CD4-positive, alpha-beta memory T cell (primary cell): ENCODE measurements at regions of chr1 and their contacts with region 1.

Region 1: GRCh38 chr1:33007190-33008050 is 29.3 kb downstream of the AK2 start:
- DNase-seq: peak in 4 of 5 donors; percentile 12 to 33 (median 22)
- H3K4me3 ChIP-seq: no peak overlapping the region
- H3K4me3 Mint-ChIP-seq: no peak overlapping the region
- H3K27ac ChIP-seq: no peak overlapping the region
- H3K27ac Mint-ChIP-seq: peak overlapping the region in 2 of 7 donors; percentile 40 to 48
- H3K4me1 ChIP-seq: no peaks in the 10 kb centered on the region
- H3K4me1 Mint-ChIP-seq: peaks cover 0 to 10% (median under 1%) of the 10 kb centered on the region in 4 donors
- H3K27me3 ChIP-seq: no peaks in the 10 kb centered on the region
- H3K27me3 Mint-ChIP-seq: no peaks in the 10 kb centered on the region

Region 2: DNA sequence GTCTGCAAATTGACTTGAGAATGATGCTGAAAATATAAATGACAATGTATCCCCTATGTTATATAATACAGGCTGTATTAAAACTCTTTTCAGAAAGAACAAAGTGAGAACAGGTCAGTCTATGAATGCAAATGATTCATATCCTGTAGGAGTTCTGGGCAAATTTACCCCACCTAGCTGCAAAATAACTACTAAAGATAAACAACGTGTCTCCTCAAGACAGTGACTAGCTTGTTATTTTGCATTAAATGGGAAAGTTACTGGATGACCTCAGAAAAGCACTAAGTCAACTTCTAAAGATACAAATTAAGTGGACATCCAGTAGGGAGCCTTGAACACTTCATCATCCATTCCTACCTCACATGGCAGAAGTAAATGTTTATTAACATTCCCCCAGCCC is 53.9 kb before region 1 on chr1:
- CTCF ChIA-PET with region 1: interaction called, 14 read pairs
- POLR2A ChIA-PET with region 1: no interaction called
- intact Hi-C with region 1: no loop called
- DNase-seq: no peak
- H3K4me3 ChIP-seq: no peak overlapping the region
- H3K4me3 Mint-ChIP-seq: peak overlapping the region in 1 of 8 donors; percentile 15
- H3K27ac ChIP-seq: no peak overlapping the region
- H3K27ac Mint-ChIP-seq: peak overlapping the region in 4 of 7 donors; percentile 1 to 67 (median 40)
- H3K4me1 ChIP-seq: peaks cover 35% of the 10 kb centered on the region
- H3K4me1 Mint-ChIP-seq: peaks cover 30 to 63% (median 45%) of the 10 kb centered on the region in 4 donors
- H3K27me3 ChIP-seq: no peaks in the 10 kb centered on the region
- H3K27me3 Mint-ChIP-seq: no peaks in the 10 kb centered on the region